ENCODE measurements at regions of chr21 and their contacts with region 1.

Region 1: GRCh38 chr21:41816220-41817165 is 49.6 kb upstream of the RIPK4 start:
- DNase-seq: peak; percentile 85
- H3K4me3 Mint-ChIP-seq: no peak overlapping the region
- H3K27ac Mint-ChIP-seq: peak overlapping the region; percentile 48
- H3K4me1 Mint-ChIP-seq: peaks cover 5% of the 10 kb centered on the region
- H3K27me3 Mint-ChIP-seq: no peaks in the 10 kb centered on the region

Region 2: GRCh38 chr21:41589131-41589530 is 227.4 kb before region 1 on chr21:
- intact Hi-C with region 1: no loop called
- DNase-seq: no peak
- H3K4me3 Mint-ChIP-seq: no peak overlapping the region
- H3K27ac Mint-ChIP-seq: no peak overlapping the region
- H3K4me1 Mint-ChIP-seq: no peaks in the 10 kb centered on the region
- H3K27me3 Mint-ChIP-seq: peaks cover 6% of the 10 kb centered on the region

Region 3: GRCh38 chr21:41865002-41865777 is 48.7 kb after region 1 on chr21:
- intact Hi-C with region 1: no loop called
- DNase-seq: no peak
- H3K4me3 Mint-ChIP-seq: no peak overlapping the region
- H3K27ac Mint-ChIP-seq: peak overlapping the region; percentile 9
- H3K4me1 Mint-ChIP-seq: peaks cover 14% of the 10 kb centered on the region
- H3K27me3 Mint-ChIP-seq: no peaks in the 10 kb centered on the region

Region 4: DNA sequence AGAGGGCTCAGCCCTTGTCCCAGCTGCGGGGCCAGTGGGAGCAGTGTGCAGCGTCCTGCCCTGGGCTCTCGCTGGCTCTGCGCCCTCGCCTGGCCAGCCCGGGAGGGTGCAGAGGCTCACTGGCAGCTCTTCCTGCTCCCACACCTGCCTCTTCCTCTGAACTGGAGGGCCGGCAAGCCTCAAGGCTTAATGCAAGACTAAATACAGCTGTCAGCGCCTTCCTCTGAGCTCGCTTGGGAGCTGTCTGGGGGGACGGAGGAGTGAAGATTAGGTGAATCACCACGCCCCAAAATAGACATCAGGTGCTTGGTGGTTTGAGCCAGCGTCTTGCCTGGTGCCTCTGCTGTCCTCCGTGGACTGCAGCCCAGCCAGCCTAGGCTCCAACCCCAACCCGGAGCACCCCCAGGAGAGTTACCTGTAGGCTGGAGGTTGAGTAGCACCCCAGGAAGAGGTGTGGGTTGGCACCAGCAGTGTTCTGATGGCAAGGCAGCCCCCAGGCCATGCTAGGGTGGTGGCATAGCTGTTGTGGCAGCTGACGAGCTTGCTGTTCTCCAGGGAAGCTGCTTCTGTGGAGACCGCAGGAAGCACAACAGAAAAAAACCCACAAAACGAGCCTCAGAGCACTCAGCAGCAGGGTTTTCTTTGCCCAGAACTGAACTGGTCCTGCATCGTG is 291.5 kb after region 1 on chr21:
- intact Hi-C with region 1: loop called (anchors 2 kb)
- DNase-seq: peak; percentile 91
- H3K4me3 Mint-ChIP-seq: peak overlapping the region; percentile 46
- H3K27ac Mint-ChIP-seq: no peak overlapping the region
- H3K4me1 Mint-ChIP-seq: peaks cover 5% of the 10 kb centered on the region
- H3K27me3 Mint-ChIP-seq: peaks cover 9% of the 10 kb centered on the region

Region 5: DNA sequence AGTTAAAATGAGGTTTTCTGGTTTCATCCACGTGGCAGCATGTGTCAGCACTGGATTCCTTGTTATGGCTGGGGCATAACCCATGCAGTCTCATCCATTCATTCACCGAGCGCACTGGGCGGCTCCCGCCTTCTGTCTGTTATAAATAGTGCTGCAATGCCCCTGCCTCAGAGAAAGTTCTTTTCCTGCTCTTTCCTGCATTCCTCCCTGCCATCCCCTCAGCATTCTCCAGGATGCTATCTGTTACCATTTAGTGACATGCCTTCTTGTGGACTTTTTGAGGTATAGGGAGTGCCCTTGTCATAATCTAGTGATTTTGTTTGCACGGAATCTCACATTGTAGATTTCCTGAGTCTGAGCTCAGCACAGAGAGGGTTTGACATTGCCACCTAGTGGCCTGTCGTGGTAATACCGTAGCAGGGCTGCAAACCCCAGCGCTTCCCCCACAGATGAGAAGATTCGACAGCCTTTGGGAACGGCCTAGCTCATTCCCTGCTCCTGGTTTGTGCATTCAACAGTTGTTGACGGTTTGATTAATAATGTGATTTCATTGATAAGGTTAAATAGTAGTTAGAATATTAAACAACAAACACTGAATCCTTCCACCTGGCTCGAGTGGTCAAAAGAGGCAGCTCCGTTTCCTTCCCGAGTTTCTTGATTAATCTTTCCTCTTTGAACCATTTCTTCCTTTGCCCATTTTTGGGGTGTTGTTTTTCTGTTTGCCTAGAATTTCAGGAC is 300.9 kb after region 1 on chr21:
- intact Hi-C with region 1: loop called (anchors 1 kb)
- DNase-seq: peak; percentile 92
- H3K4me3 Mint-ChIP-seq: no peak overlapping the region
- H3K27ac Mint-ChIP-seq: no peak overlapping the region
- H3K4me1 Mint-ChIP-seq: peaks cover 21% of the 10 kb centered on the region
- H3K27me3 Mint-ChIP-seq: peaks cover 53% of the 10 kb centered on the region

Measured in activated CD4-positive, alpha-beta T cell treated with anti-CD3 and anti-CD28 coated beads, Interleukin-2, amount 10 ng/mL, durations not matched to agents 24 days and 14 days (primary cell).